ENCODE measurements at regions of chr2 and their contacts with region 1.

Region 1: GRCh38 chr2:66434679-66435548 is at the start of gene MEIS1:
- DNase-seq: peak; percentile 96
- H3K4me3 ChIP-seq: peak within 1 kb of the TSS; percentile 62
- CTCF ChIP-seq: no peak

Region 2: DNA sequence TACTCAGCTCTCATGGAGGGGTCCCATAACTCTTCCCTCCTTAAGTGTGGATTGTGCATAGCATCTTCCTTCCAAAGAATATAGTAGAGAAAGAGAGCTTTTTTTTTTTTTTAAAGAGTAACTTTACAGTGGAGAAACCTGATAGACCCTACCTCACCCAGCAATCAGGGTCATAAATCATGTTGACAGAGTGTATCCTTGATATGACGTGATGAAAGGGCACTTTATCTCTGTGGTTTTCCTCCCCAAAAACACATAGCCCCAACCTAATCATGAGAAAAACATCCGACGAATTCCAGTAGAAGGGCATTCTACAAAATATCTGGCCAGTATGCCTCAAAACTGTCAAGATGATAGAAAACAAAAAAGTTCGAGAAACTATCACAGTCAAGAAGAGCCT is 29.4 kb before region 1 on chr2:
- in situ Hi-C with region 1: no loop called
- DNase-seq: no peak
- H3K4me3 ChIP-seq: no peak overlapping the region
- CTCF ChIP-seq: no peak

Region 3: GRCh38 chr2:66574701-66575624 is 140.0 kb after region 1 on chr2:
- in situ Hi-C with region 1: loop called (anchors 25 kb)
- DNase-seq: peak; percentile 89
- H3K4me3 ChIP-seq: peak overlapping the region; percentile 46
- CTCF ChIP-seq: peak; percentile 52